ENCODE measurements at regions of chr2 and their contacts with region 1.

Region 1: GRCh38 chr2:191677646-191678436 is at the start of gene NABP1:
- DNase-seq: peak; percentile 99
- H3K4me3 Mint-ChIP-seq: peak within 1 kb of the TSS; percentile 99
- H3K27ac Mint-ChIP-seq: peak within 1 kb of the TSS; percentile 100
- H3K4me1 Mint-ChIP-seq: peaks cover 37% of the 10 kb centered on the region
- H3K27me3 Mint-ChIP-seq: no peaks in the 10 kb centered on the region
- total RNA-seq, gene NABP1: 97.5 to 101 TPM

Region 2: GRCh38 chr2:191013932-191014652 is 663.7 kb before region 1 on chr2 and contains the start of gene STAT1:
- CTCF ChIA-PET with region 1: no interaction called
- intact Hi-C with region 1: loop called (anchors 2 kb)
- DNase-seq: peak; percentile 95
- H3K4me3 Mint-ChIP-seq: no peak within 1 kb of the TSS
- H3K27ac Mint-ChIP-seq: no peak within 1 kb of the TSS
- H3K4me1 Mint-ChIP-seq: peaks cover 39% of the 10 kb centered on the region
- H3K27me3 Mint-ChIP-seq: no peaks in the 10 kb centered on the region
- total RNA-seq, gene STAT1: 376 to 402 TPM

Region 3: GRCh38 chr2:191066197-191066918 is 611.5 kb before region 1 on chr2:
- CTCF ChIA-PET with region 1: no interaction called
- intact Hi-C with region 1: loop called (anchors 5 kb)
- DNase-seq: peak; percentile 41
- H3K4me3 Mint-ChIP-seq: peak overlapping the region; percentile 25
- H3K27ac Mint-ChIP-seq: peak overlapping the region; percentile 76
- H3K4me1 Mint-ChIP-seq: peaks cover 77% of the 10 kb centered on the region
- H3K27me3 Mint-ChIP-seq: no peaks in the 10 kb centered on the region

Region 4: GRCh38 chr2:191189112-191189635 is 488.7 kb before region 1 on chr2:
- CTCF ChIA-PET with region 1: no interaction called
- intact Hi-C with region 1: loop called (anchors 1 kb)
- DNase-seq: no peak
- H3K4me3 Mint-ChIP-seq: no peak overlapping the region
- H3K27ac Mint-ChIP-seq: peak overlapping the region; percentile 68
- H3K4me1 Mint-ChIP-seq: peaks cover 73% of the 10 kb centered on the region
- H3K27me3 Mint-ChIP-seq: no peaks in the 10 kb centered on the region

Region 5: GRCh38 chr2:191617575-191617974 is 60.3 kb before region 1 on chr2:
- CTCF ChIA-PET with region 1: interaction called, 6 read pairs
- intact Hi-C with region 1: loop called (anchors 1 kb)
- DNase-seq: peak; percentile 79
- H3K4me3 Mint-ChIP-seq: no peak overlapping the region
- H3K27ac Mint-ChIP-seq: peak overlapping the region; percentile 97
- H3K4me1 Mint-ChIP-seq: peaks cover 68% of the 10 kb centered on the region
- H3K27me3 Mint-ChIP-seq: no peaks in the 10 kb centered on the region

Region 6: DNA sequence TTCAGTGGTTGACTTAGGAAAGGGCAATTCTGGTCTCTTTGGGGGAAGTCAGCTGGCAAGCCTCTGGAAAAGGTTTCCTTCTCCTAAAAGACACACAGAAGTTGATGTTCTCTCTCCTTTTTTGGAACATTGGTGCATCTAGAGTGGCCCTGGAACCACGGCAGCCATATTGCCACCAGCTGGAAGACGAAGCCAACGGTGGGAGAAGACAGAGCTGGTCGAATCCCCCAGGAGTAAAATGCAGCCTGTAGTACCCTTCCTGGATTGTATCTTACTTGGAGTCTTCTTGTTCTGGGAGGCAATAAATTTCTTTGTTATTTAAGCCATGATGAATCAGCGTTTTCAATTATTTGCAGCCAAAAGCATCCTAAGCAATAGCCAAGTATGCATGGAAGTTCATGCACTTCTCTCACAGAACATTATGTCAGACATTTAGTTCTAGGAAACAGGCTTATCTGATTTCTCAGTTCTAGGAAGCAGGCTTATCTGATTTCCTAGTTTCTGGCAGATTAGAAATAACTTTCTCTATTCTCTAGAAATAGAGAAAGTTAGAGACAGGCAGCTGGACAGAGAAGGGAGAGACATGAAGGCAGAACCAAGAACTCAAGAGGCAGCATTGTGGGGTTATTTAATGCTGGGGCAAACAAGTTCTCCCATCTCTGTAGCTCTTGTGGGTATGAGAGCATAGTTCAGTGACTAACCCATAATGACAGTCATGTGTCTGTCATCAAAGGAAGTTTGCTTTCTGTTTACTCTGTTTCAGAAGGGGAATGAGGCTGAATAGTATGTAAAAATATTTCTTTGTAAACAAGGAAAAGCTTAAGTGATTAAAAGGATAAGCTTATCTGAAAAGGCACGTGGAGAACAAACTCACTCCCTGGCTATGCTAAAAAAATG is 40.4 kb before region 1 on chr2:
- CTCF ChIA-PET with region 1: interaction called, 6 read pairs
- intact Hi-C with region 1: loop called (anchors 1 kb)
- DNase-seq: no peak
- H3K4me3 Mint-ChIP-seq: no peak overlapping the region
- H3K27ac Mint-ChIP-seq: peak overlapping the region; percentile 77
- H3K4me1 Mint-ChIP-seq: peaks cover 58% of the 10 kb centered on the region
- H3K27me3 Mint-ChIP-seq: no peaks in the 10 kb centered on the region

Region 7: DNA sequence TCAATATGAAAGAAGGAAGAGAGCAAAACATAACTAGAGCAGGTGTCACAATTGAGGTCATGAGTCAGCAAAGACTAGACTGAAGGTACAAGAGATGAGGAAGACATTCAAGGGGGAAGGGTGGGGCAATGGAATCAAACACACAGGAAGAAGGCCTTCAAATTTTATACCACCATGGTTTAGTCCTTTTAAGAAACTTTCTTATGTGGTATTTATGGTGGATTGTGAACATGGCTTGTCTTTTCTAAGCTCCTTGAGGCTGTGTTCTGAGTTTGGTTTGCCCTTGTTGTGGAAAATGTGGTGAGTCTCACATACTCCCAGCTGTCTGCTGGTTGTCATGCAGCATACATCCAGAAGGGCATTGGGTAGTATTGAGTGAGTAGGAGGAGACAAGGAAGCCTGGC is 62.2 kb after region 1 on chr2:
- CTCF ChIA-PET with region 1: no interaction called
- intact Hi-C with region 1: loop called (anchors 1 kb)
- DNase-seq: peak; percentile 50
- H3K4me3 Mint-ChIP-seq: no peak overlapping the region
- H3K27ac Mint-ChIP-seq: peak overlapping the region; percentile 47
- H3K4me1 Mint-ChIP-seq: peaks cover 12% of the 10 kb centered on the region
- H3K27me3 Mint-ChIP-seq: peaks cover 3% of the 10 kb centered on the region

Measured in activated naive CD4-positive, alpha-beta T cell treated with anti-CD3 and anti-CD28 coated beads for 36 hours (primary cell).